WTC11 (cell line): ENCODE measurements at regions of chr9 and their contacts with region 1.

Region 1: DNA sequence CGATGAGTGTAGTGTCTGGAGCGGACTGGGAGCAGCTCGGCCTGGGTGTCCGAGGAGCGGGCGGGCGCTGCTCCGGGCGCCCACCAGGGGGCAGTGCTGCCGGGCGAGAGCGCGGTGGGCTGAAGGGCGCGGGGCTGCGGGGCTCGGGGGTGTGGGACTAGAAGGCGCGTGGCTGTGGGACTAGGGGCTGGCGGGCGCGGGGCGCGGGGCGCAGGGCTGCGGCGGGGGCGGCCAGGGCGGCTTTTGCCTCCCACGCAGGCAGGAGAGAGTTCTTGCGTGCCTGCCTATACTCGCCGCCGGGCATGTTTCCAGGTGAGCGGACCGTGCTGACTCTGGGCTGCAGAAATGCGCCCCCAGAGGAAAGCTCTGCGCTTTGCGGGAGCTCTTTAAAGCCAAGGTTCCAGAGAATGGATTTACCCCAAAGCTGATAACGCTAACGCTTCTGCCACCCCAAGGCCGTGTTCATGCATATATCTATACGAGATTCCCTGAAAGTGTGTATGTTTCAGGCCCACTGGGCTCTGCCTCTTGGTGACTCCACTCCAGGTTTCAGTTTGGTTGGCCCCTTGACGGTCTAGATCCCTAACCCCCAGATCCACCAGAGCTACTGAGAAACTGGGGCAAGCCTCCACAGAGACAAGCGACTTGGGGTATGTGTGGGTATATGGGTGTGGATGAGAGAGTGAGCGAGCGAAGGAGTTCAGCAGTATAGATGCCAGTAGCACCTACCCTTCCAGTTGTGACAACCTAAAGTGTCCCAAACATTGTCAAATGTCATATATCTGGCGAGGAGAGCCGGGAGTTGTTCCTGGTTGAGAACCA is 56.2 kb downstream of the ACER2 start:
- DNase-seq: peak; percentile 82
- ATAC-seq: peak; percentile 92
- H3K4me3 Mint-ChIP-seq: peak overlapping the region; percentile 74
- H3K27ac Mint-ChIP-seq: no peak overlapping the region
- H3K4me1 Mint-ChIP-seq: peaks cover 3% of the 10 kb centered on the region
- H3K27me3 Mint-ChIP-seq: peaks cover 9% of the 10 kb centered on the region; the same call in 1 of the 2 replicates
- CTCF ChIP-seq: peak; percentile 89

Region 2: DNA sequence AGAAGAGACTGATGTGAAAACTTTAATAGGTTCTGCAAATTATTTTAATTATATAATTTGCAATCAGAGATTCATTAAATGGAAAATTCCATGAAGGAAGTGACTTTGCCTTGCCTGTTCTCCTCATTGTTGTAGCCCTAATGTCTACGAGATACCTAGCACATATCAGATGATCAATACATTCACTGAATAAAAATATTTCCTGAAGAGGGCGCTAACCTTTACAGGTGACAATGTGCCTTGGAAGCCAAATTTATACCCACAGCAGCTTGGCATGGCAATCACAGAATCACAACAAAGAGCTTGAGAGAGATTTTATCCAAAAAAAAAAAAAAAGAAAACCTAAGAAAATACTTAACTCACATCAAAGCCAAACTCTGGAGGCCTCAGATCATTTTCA is 379.7 kb before region 1 on chr9:
- CTCF ChIA-PET with region 1: interaction called, 19 read pairs
- POLR2A ChIA-PET with region 1: no interaction called
- DNase-seq: no peak
- ATAC-seq: peak; percentile 71
- H3K4me3 Mint-ChIP-seq: no peak overlapping the region
- H3K27ac Mint-ChIP-seq: no peak overlapping the region
- H3K4me1 Mint-ChIP-seq: no peaks in the 10 kb centered on the region
- H3K27me3 Mint-ChIP-seq: no peaks in the 10 kb centered on the region
- CTCF ChIP-seq: 0 out of 2 replicates have a peak, but pooled peaks have one; percentile 24

Region 3: DNA sequence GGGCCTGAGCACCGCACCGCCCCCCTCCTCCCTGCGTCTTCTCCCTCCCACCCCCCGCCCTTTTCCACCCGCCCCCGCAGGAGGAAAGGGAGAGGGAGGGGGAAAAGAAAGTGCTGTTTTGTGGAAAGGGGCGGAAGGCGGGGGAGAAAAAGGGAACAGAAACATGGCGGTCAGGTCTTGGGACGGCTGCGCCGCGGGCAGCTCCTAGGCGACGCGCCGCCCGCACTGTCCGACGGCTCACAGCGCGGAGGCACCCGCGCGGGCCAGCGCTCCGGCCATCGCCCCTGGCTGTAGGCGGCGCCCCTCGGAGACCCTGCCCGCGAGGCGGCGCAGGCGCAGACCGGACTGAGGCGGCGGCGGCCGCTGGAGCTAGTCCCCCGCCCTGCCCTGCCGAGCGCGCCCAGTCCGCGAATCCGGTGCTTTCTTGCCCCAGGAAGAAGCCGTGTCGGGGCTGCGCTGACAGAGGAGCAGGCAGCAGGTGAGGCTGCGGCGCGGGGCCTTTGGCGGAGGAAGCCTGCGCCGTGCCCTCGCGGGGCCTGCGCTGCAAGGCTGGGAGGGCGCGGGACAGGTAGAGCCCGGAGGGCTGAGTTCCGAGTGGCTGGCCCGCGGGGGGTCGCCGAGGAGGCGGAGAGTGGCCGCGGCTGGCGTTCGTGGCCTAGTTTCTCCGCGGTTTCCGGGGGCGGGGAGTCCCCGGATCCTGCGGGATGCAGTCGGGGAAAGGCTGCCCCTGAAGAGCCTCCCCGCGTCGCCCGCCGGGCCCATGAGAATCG is 234.4 kb before region 1 on chr9 and contains the start of gene DENND4C:
- CTCF ChIA-PET with region 1: interaction called, 10 read pairs
- POLR2A ChIA-PET with region 1: no interaction called
- DNase-seq: peak; percentile 91
- ATAC-seq: peak; percentile 81
- H3K4me3 Mint-ChIP-seq: peak within 1 kb of the TSS; percentile 87
- H3K27ac Mint-ChIP-seq: peak within 1 kb of the TSS; percentile 99
- H3K4me1 Mint-ChIP-seq: peaks cover 14% of the 10 kb centered on the region
- H3K27me3 Mint-ChIP-seq: no peaks in the 10 kb centered on the region
- CTCF ChIP-seq: no peak
- total RNA-seq, gene DENND4C: 21.0 to 22.6 TPM (median 21.7 TPM) in 3 replicates

Region 4: GRCh38 chr9:19424176-19424779 is 40.7 kb before region 1 on chr9:
- CTCF ChIA-PET with region 1: interaction called, 21 read pairs
- POLR2A ChIA-PET with region 1: no interaction called
- DNase-seq: no peak
- ATAC-seq: peak; percentile 20; the same call in 1 of the 2 replicates
- H3K4me3 Mint-ChIP-seq: no peak overlapping the region
- H3K27ac Mint-ChIP-seq: peak overlapping the region; percentile 32
- H3K4me1 Mint-ChIP-seq: peaks cover 18% of the 10 kb centered on the region
- H3K27me3 Mint-ChIP-seq: no peaks in the 10 kb centered on the region
- CTCF ChIP-seq: no peak

Region 5: GRCh38 chr9:19481971-19482404 is 17.0 kb after region 1 on chr9:
- CTCF ChIA-PET with region 1: interaction called, 43 read pairs
- POLR2A ChIA-PET with region 1: no interaction called
- DNase-seq: no peak
- ATAC-seq: peak; percentile 50; the same call in 1 of the 2 replicates
- H3K4me3 Mint-ChIP-seq: no peak overlapping the region
- H3K27ac Mint-ChIP-seq: no peak overlapping the region
- H3K4me1 Mint-ChIP-seq: no peaks in the 10 kb centered on the region
- H3K27me3 Mint-ChIP-seq: no peaks in the 10 kb centered on the region
- CTCF ChIP-seq: no peak

Region 6: DNA sequence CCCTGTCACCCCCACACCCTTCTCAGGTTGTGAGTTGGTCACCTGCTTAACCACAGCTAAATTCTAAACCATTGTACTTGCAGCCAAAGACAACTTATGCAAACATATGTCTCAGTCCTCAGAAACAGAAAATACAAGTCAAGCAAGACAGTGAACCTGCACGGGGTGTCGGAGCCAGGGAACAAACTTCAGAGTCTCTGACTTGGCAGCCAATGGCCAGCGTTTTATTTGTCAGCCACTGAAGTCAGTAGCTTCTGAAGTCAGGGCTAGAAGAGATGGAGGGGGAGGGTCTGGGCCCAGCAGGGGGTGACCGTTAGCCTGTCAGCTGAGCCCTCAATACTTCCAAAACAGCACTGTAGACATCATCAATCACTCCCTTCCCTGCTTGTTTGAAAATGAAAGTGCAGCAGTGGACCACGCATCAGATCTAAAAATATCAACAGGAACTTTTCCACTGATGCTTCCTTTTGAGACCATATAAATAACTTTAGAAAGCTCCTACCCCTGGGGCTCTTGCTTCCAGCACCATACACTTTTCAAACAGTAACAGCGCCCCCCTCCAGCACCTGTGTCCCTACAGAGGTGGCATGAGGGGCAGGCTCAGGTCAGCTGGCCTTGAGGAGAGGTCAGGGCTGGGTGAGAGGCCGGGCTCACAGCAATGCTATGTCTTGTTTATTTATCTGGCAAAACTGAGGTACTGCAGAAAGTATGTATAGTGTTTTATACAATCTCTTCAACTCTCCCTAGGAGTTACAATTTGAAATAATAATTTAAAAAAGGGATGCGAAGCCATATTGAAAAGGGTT is 86.4 kb after region 1 on chr9:
- CTCF ChIA-PET with region 1: interaction called, 17 read pairs
- POLR2A ChIA-PET with region 1: no interaction called
- DNase-seq: peak; percentile 46
- ATAC-seq: peak; percentile 93
- H3K4me3 Mint-ChIP-seq: no peak overlapping the region
- H3K27ac Mint-ChIP-seq: no peak overlapping the region
- H3K4me1 Mint-ChIP-seq: peaks cover 11% of the 10 kb centered on the region
- H3K27me3 Mint-ChIP-seq: no peaks in the 10 kb centered on the region; the same call in 1 of the 2 replicates
- CTCF ChIP-seq: 0 out of 2 replicates have a peak, but pooled peaks have one; percentile 10

Region 7: GRCh38 chr9:19870988-19871387 is 406.0 kb after region 1 on chr9:
- CTCF ChIA-PET with region 1: no interaction called
- POLR2A ChIA-PET with region 1: no interaction called
- DNase-seq: no peak
- ATAC-seq: no peak
- H3K4me3 Mint-ChIP-seq: no peak overlapping the region
- H3K27ac Mint-ChIP-seq: no peak overlapping the region
- H3K4me1 Mint-ChIP-seq: peaks cover 3% of the 10 kb centered on the region; the same call in 1 of the 2 replicates
- H3K27me3 Mint-ChIP-seq: no peaks in the 10 kb centered on the region
- CTCF ChIP-seq: no peak

Region 8: DNA sequence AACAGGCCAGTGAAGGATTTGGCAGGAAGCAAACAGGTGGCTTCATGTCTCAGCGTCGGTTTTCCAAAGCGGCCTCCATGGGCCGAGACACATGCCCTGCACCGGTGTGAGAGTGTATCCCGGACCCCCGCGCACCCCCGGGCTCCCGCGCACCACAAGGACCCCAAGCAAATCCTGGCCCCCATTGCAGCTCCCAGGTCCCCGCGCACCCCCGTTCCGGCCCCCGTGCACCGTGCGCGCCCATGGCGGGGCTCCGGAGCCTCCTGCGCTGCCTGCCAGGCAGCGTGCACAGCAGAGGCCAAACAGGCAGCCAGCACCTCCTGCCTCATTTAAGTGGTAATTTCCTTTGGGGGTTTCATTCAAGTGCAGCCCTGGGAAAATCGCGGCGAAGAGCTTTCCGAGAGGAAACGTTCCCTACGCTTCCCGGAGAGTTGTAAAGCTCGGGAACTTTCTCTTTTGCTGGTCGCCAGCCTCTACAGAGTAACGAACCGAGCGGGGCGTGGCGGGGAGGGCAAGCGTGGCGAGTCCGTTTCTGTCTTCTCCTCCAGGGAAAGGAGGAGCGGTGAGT is 469.4 kb after region 1 on chr9:
- CTCF ChIA-PET with region 1: interaction called, 18 read pairs
- POLR2A ChIA-PET with region 1: no interaction called
- DNase-seq: peak; percentile 62
- ATAC-seq: peak; percentile 94
- H3K4me3 Mint-ChIP-seq: peak overlapping the region; percentile 71
- H3K27ac Mint-ChIP-seq: peak overlapping the region; percentile 93
- H3K4me1 Mint-ChIP-seq: peaks cover 20% of the 10 kb centered on the region
- H3K27me3 Mint-ChIP-seq: peaks cover 30% of the 10 kb centered on the region
- CTCF ChIP-seq: no peak